Activated naive CD4-positive, alpha-beta T cell treated with anti-CD3 and anti-CD28 coated beads, Interleukin-2, amount 10 ng/mL, durations not matched to agents 7 days and 5 days (primary cell): ENCODE measurements at regions of chr15 and their contacts with region 1.

Region 1: GRCh38 chr15:60585743-60586708 is 107.1 kb upstream of the ICE2 start:
- DNase-seq: peak; percentile 72
- H3K4me3 Mint-ChIP-seq: peak overlapping the region; percentile 44
- H3K27ac Mint-ChIP-seq: peak overlapping the region; percentile 98
- H3K4me1 Mint-ChIP-seq: peaks cover 88% of the 10 kb centered on the region
- H3K27me3 Mint-ChIP-seq: no peaks in the 10 kb centered on the region

Region 2: GRCh38 chr15:60507596-60508424 is 78.2 kb before region 1 on chr15:
- CTCF ChIA-PET with region 1: interaction called, 19 read pairs
- DNase-seq: peak; percentile 64
- H3K4me3 Mint-ChIP-seq: no peak overlapping the region
- H3K27ac Mint-ChIP-seq: peak overlapping the region; percentile 84
- H3K4me1 Mint-ChIP-seq: peaks cover 41% of the 10 kb centered on the region
- H3K27me3 Mint-ChIP-seq: no peaks in the 10 kb centered on the region

Region 3: GRCh38 chr15:60541481-60542299 is 44.3 kb before region 1 on chr15:
- CTCF ChIA-PET with region 1: no interaction called
- DNase-seq: no peak
- H3K4me3 Mint-ChIP-seq: no peak overlapping the region
- H3K27ac Mint-ChIP-seq: no peak overlapping the region
- H3K4me1 Mint-ChIP-seq: peaks cover 79% of the 10 kb centered on the region
- H3K27me3 Mint-ChIP-seq: no peaks in the 10 kb centered on the region

Region 4: GRCh38 chr15:60568301-60568742 is 17.7 kb before region 1 on chr15:
- CTCF ChIA-PET with region 1: interaction called, 28 read pairs
- DNase-seq: no peak
- H3K4me3 Mint-ChIP-seq: no peak overlapping the region
- H3K27ac Mint-ChIP-seq: peak overlapping the region; percentile 56
- H3K4me1 Mint-ChIP-seq: peaks cover 80% of the 10 kb centered on the region
- H3K27me3 Mint-ChIP-seq: no peaks in the 10 kb centered on the region

Region 5: GRCh38 chr15:60916679-60917460 is 330.8 kb after region 1 on chr15:
- CTCF ChIA-PET with region 1: interaction called, 83 read pairs
- DNase-seq: peak; percentile 91
- H3K4me3 Mint-ChIP-seq: no peak overlapping the region
- H3K27ac Mint-ChIP-seq: no peak overlapping the region
- H3K4me1 Mint-ChIP-seq: peaks cover 16% of the 10 kb centered on the region
- H3K27me3 Mint-ChIP-seq: peaks cover 5% of the 10 kb centered on the region